Activated CD4-positive, alpha-beta memory T cell treated with anti-CD3 and anti-CD28 coated beads for 36 hours (primary cell): ENCODE measurements at regions of chr1 and their contacts with region 1.

Region 1: GRCh38 chr1:201119206-201120197 is 7.3 kb upstream of the CACNA1S start:
- DNase-seq: peak; percentile 78
- H3K4me3 Mint-ChIP-seq: no peak overlapping the region
- H3K27ac Mint-ChIP-seq: no peak overlapping the region
- H3K4me1 Mint-ChIP-seq: peaks cover 5% of the 10 kb centered on the region
- H3K27me3 Mint-ChIP-seq: no peaks in the 10 kb centered on the region

Region 2: GRCh38 chr1:200015811-200016210 is 1103.7 kb before region 1 on chr1:
- CTCF ChIA-PET with region 1: no interaction called
- POLR2A ChIA-PET with region 1: no interaction called
- intact Hi-C with region 1: no loop called
- DNase-seq: no peak
- H3K4me3 Mint-ChIP-seq: no peak overlapping the region
- H3K27ac Mint-ChIP-seq: no peak overlapping the region
- H3K4me1 Mint-ChIP-seq: no peaks in the 10 kb centered on the region
- H3K27me3 Mint-ChIP-seq: peaks cover 11% of the 10 kb centered on the region

Region 3: DNA sequence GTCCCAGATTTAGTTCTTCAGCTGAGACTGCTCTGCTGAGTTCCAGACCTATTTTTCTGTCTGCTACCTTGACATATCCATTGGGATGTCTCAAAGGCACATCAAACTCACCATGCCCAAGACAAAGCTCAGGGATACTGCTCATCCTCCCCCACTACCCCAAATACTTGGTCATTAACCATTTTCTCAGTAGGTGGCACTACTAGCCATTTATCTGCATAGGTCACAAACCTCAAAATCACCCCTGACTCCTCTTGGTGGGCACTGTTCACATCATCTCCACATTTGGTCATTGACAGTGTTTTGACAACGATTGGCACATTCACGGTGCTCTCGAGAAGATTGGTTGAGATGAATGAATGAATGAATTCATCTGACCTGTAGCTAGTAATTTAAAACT is 39.4 kb before region 1 on chr1:
- CTCF ChIA-PET with region 1: interaction called, 42 read pairs
- POLR2A ChIA-PET with region 1: no interaction called
- intact Hi-C with region 1: no loop called
- DNase-seq: no peak
- H3K4me3 Mint-ChIP-seq: no peak overlapping the region
- H3K27ac Mint-ChIP-seq: no peak overlapping the region
- H3K4me1 Mint-ChIP-seq: no peaks in the 10 kb centered on the region
- H3K27me3 Mint-ChIP-seq: no peaks in the 10 kb centered on the region

Region 4: GRCh38 chr1:201085916-201086735 is 33.4 kb before region 1 on chr1:
- CTCF ChIA-PET with region 1: interaction called, 42 read pairs
- POLR2A ChIA-PET with region 1: no interaction called
- intact Hi-C with region 1: loop called (anchors 1 kb)
- DNase-seq: peak; percentile 64
- H3K4me3 Mint-ChIP-seq: no peak overlapping the region
- H3K27ac Mint-ChIP-seq: peak overlapping the region; percentile 21
- H3K4me1 Mint-ChIP-seq: no peaks in the 10 kb centered on the region
- H3K27me3 Mint-ChIP-seq: peaks cover 5% of the 10 kb centered on the region

Region 5: GRCh38 chr1:201137579-201138310 is 18.2 kb after region 1 on chr1:
- CTCF ChIA-PET with region 1: interaction called, 14 read pairs
- POLR2A ChIA-PET with region 1: no interaction called
- intact Hi-C with region 1: no loop called
- DNase-seq: no peak
- H3K4me3 Mint-ChIP-seq: no peak overlapping the region
- H3K27ac Mint-ChIP-seq: no peak overlapping the region
- H3K4me1 Mint-ChIP-seq: no peaks in the 10 kb centered on the region
- H3K27me3 Mint-ChIP-seq: no peaks in the 10 kb centered on the region